ENCODE measurements at regions of chr16 and their contacts with region 1.

Region 1: GRCh38 chr16:28950648-28951409 is at the start of gene NFATC2IP:
- DNase-seq: peak; percentile 100
- ATAC-seq: peak; percentile 99
- H3K4me3 ChIP-seq: peak within 1 kb of the TSS; percentile 80 to 89
- H3K27ac ChIP-seq: peak within 1 kb of the TSS; percentile 32 to 38
- H3K4me1 ChIP-seq: peaks cover 0 to 1% of the 10 kb centered on the region in 2 donors
- H3K27me3 ChIP-seq: no peaks in the 10 kb centered on the region
- total RNA-seq, gene NFATC2IP: 21.5 to 38.5 TPM

Region 2: GRCh38 chr16:28823872-28824716 is 126.7 kb before region 1 on chr16:
- intact Hi-C with region 1: loop called (anchors 5 kb)
- DNase-seq: peak; percentile 99
- ATAC-seq: peak; percentile 96
- H3K4me3 ChIP-seq: peak overlapping the region; percentile 81 to 98
- H3K27ac ChIP-seq: peak overlapping the region; percentile 96
- H3K4me1 ChIP-seq: no peaks in the 10 kb centered on the region
- H3K27me3 ChIP-seq: no peaks in the 10 kb centered on the region

Region 3: DNA sequence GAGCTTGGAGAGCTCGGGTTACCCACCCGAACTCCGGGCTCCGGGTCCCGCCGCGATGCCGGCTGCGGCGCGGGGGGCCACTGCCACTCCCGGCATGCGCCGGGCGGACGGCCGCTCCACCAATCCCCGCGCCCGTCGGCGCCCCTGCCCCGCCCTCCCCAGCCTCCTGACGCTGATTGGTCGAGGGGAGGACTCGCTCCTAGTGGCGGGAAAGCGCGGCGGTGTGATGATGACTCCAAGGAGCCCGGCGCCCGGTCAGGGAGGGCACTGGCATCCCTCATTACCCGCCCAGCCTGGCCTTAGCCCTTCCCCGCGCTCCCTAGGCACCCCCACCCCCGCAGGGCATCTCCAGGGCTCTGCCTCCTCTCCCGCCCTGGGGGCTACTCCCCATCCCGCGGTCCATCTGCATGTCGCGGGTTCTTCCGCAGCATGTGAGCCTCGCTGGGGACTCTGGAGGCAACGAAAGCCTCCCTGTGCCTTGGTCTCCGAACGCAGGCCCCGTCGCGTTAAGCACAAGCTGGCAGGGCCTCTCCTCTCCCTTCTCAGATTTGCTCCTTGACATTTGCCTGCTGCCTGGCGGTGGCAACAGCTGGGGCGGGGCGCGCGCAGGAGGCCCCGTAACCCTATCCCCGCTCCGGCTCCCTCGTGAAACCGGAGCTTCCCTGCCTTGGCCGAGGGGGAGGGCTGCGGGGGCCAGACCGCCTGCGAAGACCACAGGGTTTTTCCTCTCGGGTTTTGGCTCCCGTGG is 70.8 kb before region 1 on chr16:
- intact Hi-C with region 1: loop called in 1 of 2 experiments (anchors 5 kb)
- DNase-seq: peak; percentile 91 to 97
- ATAC-seq: peak; percentile 91
- H3K4me3 ChIP-seq: peak overlapping the region; percentile 12 to 49
- H3K27ac ChIP-seq: no peak overlapping the region
- H3K4me1 ChIP-seq: no peaks in the 10 kb centered on the region
- H3K27me3 ChIP-seq: no peaks in the 10 kb centered on the region